Heart right ventricle (tissue), 16 donors: ENCODE measurements at regions of chr6 and their contacts with region 1.

Region 1: DNA sequence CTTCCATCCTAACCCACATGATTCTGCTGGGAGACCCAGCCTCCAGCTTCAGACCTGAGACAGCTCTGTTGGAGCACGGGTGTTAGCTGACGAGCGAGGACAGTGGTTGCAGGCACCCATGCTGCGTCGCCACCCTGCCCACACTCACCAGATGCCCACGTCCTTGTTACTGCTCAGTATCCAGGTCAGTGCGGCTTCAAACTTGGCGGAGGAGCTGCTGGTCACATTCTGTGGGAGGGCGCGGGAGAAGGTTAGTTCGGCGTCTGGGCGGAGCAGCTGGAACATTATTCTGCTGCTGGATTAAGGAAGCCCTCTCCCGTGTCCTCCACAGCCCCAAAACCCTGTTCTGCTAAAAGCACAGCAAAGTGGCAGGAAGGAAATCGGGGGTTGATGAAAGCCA is 9.0 kb downstream of the LEMD2 start:
- DNase-seq: no peak
- ATAC-seq: no peak
- H3K4me3 ChIP-seq: no peak overlapping the region
- H3K27ac ChIP-seq: peak overlapping the region in 1 of 10 donors; percentile 4
- H3K4me1 ChIP-seq: peaks cover 7 to 49% (median 31%) of the 10 kb centered on the region in 9 donors
- H3K27me3 ChIP-seq: no peaks in the 10 kb centered on the region
- CTCF ChIP-seq: no peak

Region 2: DNA sequence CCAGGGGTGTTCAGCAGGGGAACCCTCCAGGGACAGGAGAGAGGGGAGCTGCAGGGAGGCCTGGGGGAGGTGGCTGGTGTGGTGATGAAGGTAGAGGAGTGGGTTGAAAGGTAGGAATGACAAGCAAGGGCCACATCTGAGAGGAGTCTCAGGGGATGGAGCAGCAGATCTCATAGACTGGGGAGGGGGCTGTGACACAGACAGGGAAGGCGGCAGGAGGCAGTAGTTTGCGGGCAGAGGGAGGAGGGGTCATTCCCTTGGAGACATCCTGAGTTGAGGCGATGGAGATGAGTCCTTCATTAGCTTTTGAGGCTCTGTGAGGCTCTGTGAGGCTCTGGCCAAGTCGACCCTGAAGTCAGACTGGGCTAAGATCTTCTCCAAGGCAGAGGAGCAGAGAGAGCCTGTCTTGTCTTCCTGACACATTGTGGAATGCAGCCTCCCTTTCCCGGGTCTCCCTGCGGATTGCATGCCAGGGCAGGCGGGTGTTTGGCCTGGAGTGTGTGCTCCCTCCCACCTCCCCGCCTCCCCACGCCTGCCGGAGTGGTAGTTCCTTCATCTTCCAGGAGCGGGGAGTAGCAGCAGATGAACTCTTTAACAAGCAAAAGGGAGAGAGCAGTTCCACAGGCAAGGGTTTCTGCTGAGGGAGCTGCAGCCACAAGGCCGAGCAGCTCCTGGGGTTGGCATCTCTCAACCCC is 58.2 kb after region 1 on chr6:
- intact Hi-C with region 1: loop called in 1 of 10 experiments (anchors 1 kb)
- DNase-seq: no peak
- ATAC-seq: no peak
- H3K4me3 ChIP-seq: no peak overlapping the region
- H3K27ac ChIP-seq: no peak overlapping the region
- H3K4me1 ChIP-seq: peaks cover 0 to 25% (median 3%) of the 10 kb centered on the region in 9 donors
- H3K27me3 ChIP-seq: peaks cover 0 to 29% (median 5%) of the 10 kb centered on the region in 7 donors
- CTCF ChIP-seq: no peak

Region 3: DNA sequence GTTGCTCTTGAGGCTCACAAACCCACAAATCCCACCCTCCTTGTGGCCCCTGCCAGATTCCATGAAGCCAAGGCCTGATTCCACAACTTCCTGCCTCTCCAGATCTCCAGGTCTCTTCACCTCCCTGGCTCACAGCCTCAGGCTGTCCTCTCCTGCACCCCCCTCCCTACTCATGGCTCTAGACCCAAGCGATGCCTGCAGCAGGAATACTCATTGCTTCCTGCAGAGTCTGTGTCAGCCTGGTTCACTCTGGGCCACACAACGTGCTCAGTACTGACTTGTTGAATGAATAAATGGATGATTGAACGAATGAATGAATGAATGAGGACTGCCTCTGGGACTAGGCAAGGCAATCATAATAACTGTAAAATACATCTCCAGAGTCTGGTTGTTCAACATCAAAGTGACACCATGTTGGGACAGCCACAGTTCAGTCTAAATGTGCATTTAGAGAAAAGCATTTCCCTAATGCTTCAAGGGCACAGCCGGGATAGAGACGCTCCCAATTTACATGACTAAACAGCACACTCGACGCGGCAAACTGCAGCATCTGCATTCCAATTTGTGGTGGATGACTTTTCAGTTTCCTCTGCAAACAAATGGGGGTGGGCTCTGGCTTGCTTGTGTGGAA is 226.1 kb after region 1 on chr6:
- intact Hi-C with region 1: no loop called
- DNase-seq: no peak
- ATAC-seq: no peak
- H3K4me3 ChIP-seq: no peak overlapping the region
- H3K27ac ChIP-seq: no peak overlapping the region
- H3K4me1 ChIP-seq: no peaks in the 10 kb centered on the region
- H3K27me3 ChIP-seq: peaks cover 0 to 60% (median 43%) of the 10 kb centered on the region in 7 donors
- CTCF ChIP-seq: no peak